ENCODE measurements at regions of chr14 and their contacts with region 1.

Region 1: DNA sequence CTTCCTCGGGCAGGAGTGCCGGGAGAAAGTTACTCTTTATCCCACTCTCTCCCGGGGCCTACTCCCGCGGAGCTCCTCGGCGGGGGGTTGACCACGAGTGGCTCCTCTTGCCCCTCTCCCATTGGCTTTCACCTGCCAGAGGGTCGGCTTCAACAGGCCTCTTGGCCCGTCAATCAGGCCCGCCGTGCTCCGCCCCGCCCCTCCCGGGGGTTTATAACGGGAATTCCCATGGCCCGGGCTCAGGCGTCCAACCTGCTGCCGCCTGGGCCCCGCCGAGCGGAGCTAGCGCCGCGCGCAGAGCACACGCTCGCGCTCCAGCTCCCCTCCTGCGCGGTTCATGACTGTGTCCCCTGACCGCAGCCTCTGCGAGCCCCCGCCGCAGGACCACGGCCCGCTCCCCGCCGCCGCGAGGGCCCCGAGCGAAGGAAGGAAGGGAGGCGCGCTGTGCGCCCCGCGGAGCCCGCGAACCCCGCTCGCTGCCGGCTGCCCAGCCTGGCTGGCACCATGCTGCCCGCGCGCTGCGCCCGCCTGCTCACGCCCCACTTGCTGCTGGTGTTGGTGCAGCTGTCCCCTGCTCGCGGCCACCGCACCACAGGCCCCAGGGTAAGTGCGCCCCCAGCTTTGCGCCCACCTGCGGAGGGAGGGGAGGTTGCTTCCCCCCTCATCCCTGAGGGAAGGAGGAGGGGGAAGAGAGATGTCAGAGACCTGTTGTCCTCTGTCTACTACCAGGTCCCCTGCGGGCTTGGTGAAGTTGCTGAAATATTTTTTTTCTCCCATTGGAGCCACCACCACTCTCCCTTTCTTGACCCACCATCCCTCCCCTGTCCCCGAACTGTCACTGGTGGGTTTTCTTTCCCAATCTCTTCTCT is at the start of gene SMOC1:
- DNase-seq: peak; percentile 50 to 82 (median 68)
- H3K4me3 ChIP-seq: peak within 1 kb of the TSS; percentile 38 to 79 (median 62)
- H3K27ac ChIP-seq: peak within 1 kb of the TSS in 12 of 59 donors; percentile 11 to 64 (median 40)
- H3K27me3 ChIP-seq: peaks cover 0 to 30% (median 14%) of the 10 kb centered on the region in 45 donors
- CTCF ChIP-seq: peak in 8 of 56 donors; percentile 7 to 37 (median 14)
- total RNA-seq, gene SMOC1: 7.9 to 85.1 (median 34.1) TPM

Region 2: GRCh38 chr14:69921052-69921451 is 41.6 kb after region 1 on chr14:
- intact Hi-C with region 1: loop called in 1 of 2 experiments (anchors 5 kb)
- DNase-seq: no peak
- H3K4me3 ChIP-seq: no peak overlapping the region
- H3K27ac ChIP-seq: peak overlapping the region in 1 of 59 donors; percentile 6
- H3K27me3 ChIP-seq: peaks cover 0 to 8% (median 0%) of the 10 kb centered on the region in 45 donors
- CTCF ChIP-seq: no peak

Region 3: DNA sequence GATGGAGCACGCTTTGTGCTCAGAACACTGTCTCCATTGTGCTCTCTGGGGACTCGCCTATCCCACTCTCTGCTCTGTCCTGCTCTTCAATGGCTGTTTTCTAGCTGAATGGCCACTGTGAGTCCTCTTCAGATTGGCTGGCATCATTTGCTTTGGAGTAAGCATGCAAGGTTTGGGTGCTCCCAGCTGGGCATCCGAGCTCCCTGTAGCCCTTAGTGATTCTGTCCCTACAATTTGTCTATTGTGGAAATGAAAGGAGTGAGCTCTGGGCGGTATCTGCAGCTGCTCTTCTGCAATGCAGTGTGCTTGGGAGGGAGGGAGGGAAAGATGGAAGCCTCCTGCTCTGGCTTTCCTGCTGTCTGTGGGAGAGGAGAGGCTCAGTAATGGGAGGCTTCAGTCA is 84.6 kb after region 1 on chr14:
- intact Hi-C with region 1: loop called in 1 of 2 experiments (anchors 5 kb)
- DNase-seq: peak in 9 of 10 donors; percentile 36 to 88 (median 77)
- H3K4me3 ChIP-seq: peak overlapping the region in 1 of 59 donors; percentile 1
- H3K27ac ChIP-seq: peak overlapping the region in 52 of 59 donors; percentile 2 to 89 (median 76)
- H3K27me3 ChIP-seq: no peaks in the 10 kb centered on the region
- CTCF ChIP-seq: peak in 6 of 56 donors; percentile 8 to 37 (median 16)

Region 4: DNA sequence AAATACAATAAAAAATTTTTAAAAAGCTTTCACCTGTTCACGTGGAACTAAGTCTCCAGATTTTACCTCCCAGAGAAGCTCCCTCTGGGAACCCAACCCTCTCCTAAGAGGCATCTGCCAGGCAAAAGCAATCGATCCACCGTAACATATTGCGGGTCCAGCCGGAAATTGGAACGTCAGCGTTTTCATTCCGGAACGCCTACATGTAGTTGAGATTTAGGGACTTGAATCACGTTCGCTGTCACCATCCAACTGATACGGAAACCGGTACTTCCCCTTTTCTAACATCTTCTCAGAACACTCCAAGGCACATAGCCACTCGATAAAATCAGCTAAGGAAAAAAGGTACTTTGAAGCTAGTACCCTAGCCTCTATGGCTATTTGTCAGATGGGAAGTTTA is 409.7 kb after region 1 on chr14:
- intact Hi-C with region 1: no loop called
- DNase-seq: no peak
- H3K4me3 ChIP-seq: no peak overlapping the region
- H3K27ac ChIP-seq: no peak overlapping the region
- H3K27me3 ChIP-seq: peaks cover 0 to 10% (median 0%) of the 10 kb centered on the region in 45 donors
- CTCF ChIP-seq: no peak

Measured in dorsolateral prefrontal cortex (tissue), 120 donors.